Activated CD4-positive, alpha-beta T cell treated with anti-CD3 and anti-CD28 coated beads for 36 hours (primary cell): ENCODE measurements at regions of chr12 and their contacts with region 1.

Region 1: GRCh38 chr12:126747530-126748149 is 1519.3 kb upstream of the TMEM132C start:
- DNase-seq: peak; percentile 80
- ATAC-seq: peak; percentile 71
- H3K4me3 Mint-ChIP-seq: no peak overlapping the region
- H3K27ac Mint-ChIP-seq: no peak overlapping the region
- H3K4me1 Mint-ChIP-seq: no peaks in the 10 kb centered on the region
- H3K27me3 Mint-ChIP-seq: peaks cover 2% of the 10 kb centered on the region

Region 2: GRCh38 chr12:126708492-126708896 is 39.1 kb before region 1 on chr12:
- CTCF ChIA-PET with region 1: interaction called, 12 read pairs
- POLR2A ChIA-PET with region 1: no interaction called
- intact Hi-C with region 1: no loop called
- DNase-seq: peak; percentile 44
- ATAC-seq: peak; percentile 95
- H3K4me3 Mint-ChIP-seq: no peak overlapping the region
- H3K27ac Mint-ChIP-seq: no peak overlapping the region
- H3K4me1 Mint-ChIP-seq: peaks cover 9% of the 10 kb centered on the region
- H3K27me3 Mint-ChIP-seq: peaks cover 4% of the 10 kb centered on the region

Region 3: GRCh38 chr12:126761420-126761819 is 13.8 kb after region 1 on chr12:
- CTCF ChIA-PET with region 1: interaction called, 11 read pairs
- POLR2A ChIA-PET with region 1: no interaction called
- intact Hi-C with region 1: no loop called
- DNase-seq: no peak
- ATAC-seq: peak; percentile 88
- H3K4me3 Mint-ChIP-seq: no peak overlapping the region
- H3K27ac Mint-ChIP-seq: peak overlapping the region; percentile 82
- H3K4me1 Mint-ChIP-seq: peaks cover 30% of the 10 kb centered on the region
- H3K27me3 Mint-ChIP-seq: no peaks in the 10 kb centered on the region